ENCODE measurements at regions of chr5 and their contacts with region 1.

Region 1: GRCh38 chr5:61408476-61409168 is 76.6 kb downstream of the ZSWIM6 start:
- DNase-seq: peak; percentile 100
- H3K4me3 ChIP-seq: peak overlapping the region in 3 of 4 donors; percentile 19 to 33 (median 29)
- H3K27ac ChIP-seq: peak overlapping the region; percentile 62 to 82 (median 72)
- H3K4me1 ChIP-seq: peaks cover 0 to 72% (median 34%) of the 10 kb centered on the region in 4 donors
- H3K27me3 ChIP-seq: no peaks in the 10 kb centered on the region
- CTCF ChIP-seq: no peak
- EP300 ChIP-seq: peak; percentile 44 to 97 (median 84)
- POLR2A ChIP-seq: no peak

Region 2: GRCh38 chr5:61625681-61626621 is 217.3 kb after region 1 on chr5:
- intact Hi-C with region 1: loop called (anchors 5 kb)
- DNase-seq: peak; percentile 89
- H3K4me3 ChIP-seq: peak overlapping the region; percentile 45 to 82 (median 69)
- H3K27ac ChIP-seq: peak overlapping the region; percentile 81 to 93 (median 84)
- H3K4me1 ChIP-seq: peaks cover 0 to 27% (median 16%) of the 10 kb centered on the region in 4 donors
- H3K27me3 ChIP-seq: no peaks in the 10 kb centered on the region
- CTCF ChIP-seq: no peak
- EP300 ChIP-seq: peak in 1 of 4 donors; percentile 13
- POLR2A ChIP-seq: peak in 1 of 2 donors; percentile 13

Region 3: GRCh38 chr5:61689153-61689846 is 280.7 kb after region 1 on chr5:
- intact Hi-C with region 1: no loop called
- DNase-seq: no peak
- H3K4me3 ChIP-seq: no peak overlapping the region
- H3K27ac ChIP-seq: no peak overlapping the region
- H3K4me1 ChIP-seq: peaks cover 0 to 3% (median 0%) of the 10 kb centered on the region in 4 donors
- H3K27me3 ChIP-seq: no peaks in the 10 kb centered on the region
- CTCF ChIP-seq: no peak
- EP300 ChIP-seq: no peak
- POLR2A ChIP-seq: no peak

Measured in sigmoid colon (tissue), 7 donors.